ENCODE measurements at regions of chr19 and their contacts with region 1.

Region 1: DNA sequence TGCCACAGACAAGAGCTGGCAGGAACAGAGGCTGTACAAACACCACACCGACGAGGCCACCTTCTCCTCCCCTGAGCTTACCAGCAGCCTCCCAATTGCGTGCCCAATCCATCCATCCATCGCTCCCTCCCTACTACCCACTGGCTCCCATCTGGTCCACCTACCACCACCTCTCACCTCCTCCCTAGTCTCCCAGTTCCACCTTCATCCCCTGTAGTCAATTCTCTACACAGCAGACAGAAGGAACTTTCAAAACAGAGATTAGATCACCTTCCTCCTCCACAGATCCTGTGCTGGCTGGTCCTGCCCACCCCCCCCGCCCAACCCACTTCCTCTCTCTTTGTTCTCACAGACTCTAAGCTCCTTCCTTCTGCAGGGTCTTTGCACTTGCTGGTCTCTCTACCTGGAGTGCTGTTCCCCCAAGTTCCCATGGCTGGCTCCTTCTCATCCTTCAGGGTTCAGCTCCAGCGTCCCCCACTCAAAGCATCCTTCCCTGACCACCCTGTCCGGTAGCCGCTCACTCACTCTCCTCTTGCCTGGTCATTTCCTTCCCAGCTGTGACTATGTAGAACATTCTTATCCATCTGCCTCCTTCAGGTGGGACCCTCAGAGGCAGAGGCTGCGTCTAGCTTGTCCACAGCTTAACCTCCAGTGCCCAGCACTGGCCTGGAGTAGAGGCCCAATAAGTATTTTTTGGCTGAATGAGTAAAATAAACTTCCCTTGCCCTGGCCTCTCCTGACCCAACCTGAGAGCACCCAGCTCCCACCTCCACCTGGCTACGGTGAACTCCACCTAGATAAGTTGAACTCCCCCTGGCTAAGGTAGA is 23.0 kb downstream of the PIN1 start:
- DNase-seq: peak in 4 of 5 donors; percentile 44 to 60 (median 54)
- H3K4me3 ChIP-seq: peak overlapping the region; percentile 63 to 87
- H3K4me3 Mint-ChIP-seq: peak overlapping the region; percentile 90 to 100 (median 96)
- H3K27ac ChIP-seq: peak overlapping the region; percentile 60
- H3K27ac Mint-ChIP-seq: peak overlapping the region; percentile 86 to 99 (median 97)
- H3K4me1 ChIP-seq: peaks cover 85% of the 10 kb centered on the region
- H3K4me1 Mint-ChIP-seq: peaks cover 42 to 90% (median 65%) of the 10 kb centered on the region in 4 donors
- H3K27me3 ChIP-seq: no peaks in the 10 kb centered on the region
- H3K27me3 Mint-ChIP-seq: no peaks in the 10 kb centered on the region

Region 2: DNA sequence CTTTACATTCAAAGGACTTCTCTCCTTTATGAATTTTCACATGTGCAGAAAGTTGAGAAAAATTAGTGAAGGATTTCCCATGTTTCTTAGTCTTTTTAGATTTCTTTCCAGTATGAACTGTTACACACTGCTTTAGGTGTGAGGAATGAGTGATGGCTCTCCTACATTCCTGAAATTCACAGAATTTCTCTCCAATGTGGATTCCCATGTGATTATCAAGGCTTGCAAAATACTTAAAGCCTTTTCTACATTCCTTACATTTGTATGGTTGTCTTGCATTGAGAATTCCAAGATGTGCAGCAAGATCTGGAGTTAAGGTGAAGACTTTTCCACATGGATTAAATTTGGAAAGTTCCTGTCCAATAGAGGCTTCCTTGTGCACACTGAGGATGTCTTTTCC is 167.4 kb before region 1 on chr19:
- CTCF ChIA-PET with region 1: no interaction called
- POLR2A ChIA-PET with region 1: no interaction called
- intact Hi-C with region 1: no loop called
- DNase-seq: no peak
- H3K4me3 ChIP-seq: no peak overlapping the region
- H3K4me3 Mint-ChIP-seq: no peak overlapping the region
- H3K27ac ChIP-seq: no peak overlapping the region
- H3K27ac Mint-ChIP-seq: no peak overlapping the region
- H3K4me1 ChIP-seq: no peaks in the 10 kb centered on the region
- H3K4me1 Mint-ChIP-seq: no peaks in the 10 kb centered on the region
- H3K27me3 ChIP-seq: no peaks in the 10 kb centered on the region
- H3K27me3 Mint-ChIP-seq: peaks cover 6 to 12% of the 10 kb centered on the region in 2 donors

Region 3: DNA sequence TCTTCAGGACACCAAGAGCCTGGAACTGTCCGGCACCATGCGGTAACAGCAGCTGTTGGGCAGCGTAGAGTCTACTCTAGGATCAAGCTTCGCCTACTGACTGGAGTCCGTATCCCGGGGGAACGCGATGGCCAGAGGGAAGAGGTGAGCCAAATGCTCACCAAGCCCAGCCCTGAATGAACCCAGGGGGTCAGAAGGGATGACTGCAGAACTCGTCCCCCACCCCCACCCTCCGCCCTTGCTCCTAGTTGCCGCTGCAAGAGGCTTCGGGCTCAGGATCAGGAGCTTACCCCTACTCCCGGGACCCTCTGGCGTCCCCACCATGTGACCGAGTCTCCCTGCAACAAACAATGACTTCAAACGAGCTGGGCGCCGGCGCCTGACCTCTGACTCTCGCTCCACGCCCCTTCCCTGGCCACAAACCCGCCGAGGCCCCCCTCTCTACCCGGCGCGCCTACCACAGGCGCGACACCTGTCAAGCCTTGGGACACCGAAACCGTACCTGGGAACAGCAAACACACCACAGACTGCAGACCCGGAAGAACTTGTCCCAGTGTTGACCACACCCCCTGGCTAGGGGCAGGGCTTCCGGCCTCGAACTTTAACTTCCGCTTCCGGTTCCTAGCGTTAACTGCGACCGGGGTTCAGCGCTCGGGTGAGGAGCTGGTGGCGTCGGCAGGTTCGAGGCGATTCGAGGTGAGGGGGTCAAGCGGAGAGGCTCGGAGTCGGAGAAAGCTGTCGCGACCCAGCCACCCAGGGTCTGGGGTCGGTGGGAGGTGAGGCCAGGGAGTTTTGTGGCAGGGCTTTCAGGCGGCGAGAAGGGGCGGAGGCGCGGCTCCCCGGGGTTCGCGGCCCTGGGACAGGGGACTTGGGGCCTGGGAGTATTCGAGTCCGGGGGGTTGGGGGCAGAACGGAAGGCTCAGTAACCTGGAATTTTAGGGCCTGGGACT is 30.6 kb before region 1 on chr19 and contains the start of gene UBL5:
- CTCF ChIA-PET with region 1: no interaction called
- POLR2A ChIA-PET with region 1: interaction called, 26 read pairs
- intact Hi-C with region 1: no loop called
- DNase-seq: peak; percentile 88 to 93 (median 89)
- H3K4me3 ChIP-seq: peak within 1 kb of the TSS; percentile 87 to 96
- H3K4me3 Mint-ChIP-seq: peak within 1 kb of the TSS; percentile 99 to 100 (median 100)
- H3K27ac ChIP-seq: peak within 1 kb of the TSS; percentile 82
- H3K27ac Mint-ChIP-seq: peak within 1 kb of the TSS; percentile 92 to 100 (median 98)
- H3K4me1 ChIP-seq: peaks cover 23% of the 10 kb centered on the region
- H3K4me1 Mint-ChIP-seq: peaks cover 15 to 41% (median 29%) of the 10 kb centered on the region in 4 donors
- H3K27me3 ChIP-seq: no peaks in the 10 kb centered on the region
- H3K27me3 Mint-ChIP-seq: no peaks in the 10 kb centered on the region
- total RNA-seq, gene UBL5: 241 to 247 TPM

Region 4: GRCh38 chr19:9834726-9835506 is 23.2 kb before region 1 on chr19 and contains the start of gene PIN1:
- CTCF ChIA-PET with region 1: interaction called, 10 read pairs
- POLR2A ChIA-PET with region 1: interaction called, 40 read pairs
- intact Hi-C with region 1: loop called (anchors 1 kb)
- DNase-seq: peak; percentile 99 to 100 (median 99)
- H3K4me3 ChIP-seq: peak within 1 kb of the TSS; percentile 55 to 97
- H3K4me3 Mint-ChIP-seq: peak within 1 kb of the TSS; percentile 93 to 97 (median 96)
- H3K27ac ChIP-seq: peak within 1 kb of the TSS; percentile 74
- H3K27ac Mint-ChIP-seq: peak within 1 kb of the TSS; percentile 91 to 99 (median 97)
- H3K4me1 ChIP-seq: peaks cover 14% of the 10 kb centered on the region
- H3K4me1 Mint-ChIP-seq: peaks cover 10 to 34% (median 19%) of the 10 kb centered on the region in 4 donors
- H3K27me3 ChIP-seq: no peaks in the 10 kb centered on the region
- H3K27me3 Mint-ChIP-seq: no peaks in the 10 kb centered on the region
- total RNA-seq, gene PIN1: 72.1 to 76.9 TPM